ENCODE measurements at regions of chr1 and their contacts with region 1.

Region 1: GRCh38 chr1:203765029-203765837 is at the start of gene LAX1:
- DNase-seq: peak; percentile 87
- H3K4me3 Mint-ChIP-seq: peak within 1 kb of the TSS; percentile 95
- H3K27ac Mint-ChIP-seq: peak within 1 kb of the TSS; percentile 100
- H3K4me1 Mint-ChIP-seq: peaks cover 54% of the 10 kb centered on the region
- H3K27me3 Mint-ChIP-seq: no peaks in the 10 kb centered on the region
- total RNA-seq, gene LAX1: 22.7 to 23.2 TPM

Region 2: DNA sequence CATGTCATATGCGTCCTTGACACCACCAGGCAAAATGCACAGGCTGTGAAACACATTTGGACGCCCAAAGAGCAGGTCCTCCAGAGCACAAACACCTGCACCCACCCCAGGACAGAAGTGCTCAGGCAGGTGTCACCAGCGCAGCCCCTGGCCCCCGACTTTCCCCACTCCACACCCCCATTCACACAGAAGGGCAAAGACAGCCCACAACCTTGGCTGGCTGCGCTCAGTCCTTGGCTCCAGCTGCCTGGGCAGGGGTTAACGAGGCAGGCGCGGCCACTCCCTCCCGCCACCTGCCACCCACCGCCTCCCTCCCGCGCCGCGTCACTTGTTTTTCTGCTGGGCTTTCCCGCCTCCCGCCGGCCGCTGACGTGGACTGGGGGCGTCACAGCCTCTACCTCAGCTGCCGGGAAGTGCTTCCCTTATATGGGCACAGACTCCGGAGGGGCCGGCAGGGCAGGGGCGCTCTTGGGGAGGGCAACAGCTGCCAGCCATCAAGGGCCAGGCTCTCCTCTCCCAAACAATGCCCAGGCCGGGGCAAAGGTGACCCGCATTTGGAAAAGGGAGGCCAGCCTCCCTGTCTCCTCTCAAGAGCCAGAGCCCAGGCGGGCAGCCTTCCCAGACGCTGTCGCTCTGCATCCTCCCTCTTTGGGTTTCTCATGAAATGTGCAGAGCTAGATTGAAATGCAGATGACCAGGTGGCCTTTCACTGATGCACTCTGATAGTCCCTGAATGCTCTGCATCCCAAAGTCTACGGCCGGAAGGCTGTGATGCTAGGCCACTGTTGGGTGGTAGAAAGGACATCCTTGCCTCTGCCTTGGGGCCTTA is 474.8 kb before region 1 on chr1:
- CTCF ChIA-PET with region 1: no interaction called
- POLR2A ChIA-PET with region 1: interaction called, 14 read pairs
- DNase-seq: peak; percentile 98
- H3K4me3 Mint-ChIP-seq: peak overlapping the region; percentile 76
- H3K27ac Mint-ChIP-seq: peak overlapping the region; percentile 100
- H3K4me1 Mint-ChIP-seq: peaks cover 73% of the 10 kb centered on the region
- H3K27me3 Mint-ChIP-seq: no peaks in the 10 kb centered on the region

Region 3: GRCh38 chr1:203682473-203683383 is 82.5 kb before region 1 on chr1:
- CTCF ChIA-PET with region 1: no interaction called
- POLR2A ChIA-PET with region 1: interaction called, 14 read pairs
- DNase-seq: peak; percentile 80
- H3K4me3 Mint-ChIP-seq: peak overlapping the region; percentile 0
- H3K27ac Mint-ChIP-seq: peak overlapping the region; percentile 81
- H3K4me1 Mint-ChIP-seq: peaks cover 55% of the 10 kb centered on the region
- H3K27me3 Mint-ChIP-seq: no peaks in the 10 kb centered on the region

Region 4: DNA sequence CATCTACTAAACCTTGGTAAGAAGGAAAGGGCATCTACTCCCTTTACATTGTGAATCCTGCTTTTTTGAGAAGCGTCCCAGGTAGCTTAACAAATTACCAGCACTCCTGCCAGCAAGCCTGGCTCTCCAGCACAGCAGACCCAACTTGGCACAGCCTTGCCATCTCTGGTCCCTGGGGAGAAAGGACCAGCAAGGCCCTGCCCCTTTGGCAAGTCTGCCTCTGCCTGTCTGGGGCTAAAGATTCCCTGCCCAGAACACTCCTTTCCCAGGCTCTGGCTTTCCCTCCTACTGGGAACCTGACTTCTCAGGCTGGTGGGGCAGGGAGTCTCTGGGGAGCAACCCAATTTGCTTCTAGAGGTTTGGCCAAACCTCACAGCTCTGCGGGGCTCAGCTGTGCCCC is 70.1 kb before region 1 on chr1:
- CTCF ChIA-PET with region 1: no interaction called
- POLR2A ChIA-PET with region 1: no interaction called
- DNase-seq: no peak
- H3K4me3 Mint-ChIP-seq: no peak overlapping the region
- H3K27ac Mint-ChIP-seq: no peak overlapping the region
- H3K4me1 Mint-ChIP-seq: peaks cover 51% of the 10 kb centered on the region
- H3K27me3 Mint-ChIP-seq: no peaks in the 10 kb centered on the region

Region 5: DNA sequence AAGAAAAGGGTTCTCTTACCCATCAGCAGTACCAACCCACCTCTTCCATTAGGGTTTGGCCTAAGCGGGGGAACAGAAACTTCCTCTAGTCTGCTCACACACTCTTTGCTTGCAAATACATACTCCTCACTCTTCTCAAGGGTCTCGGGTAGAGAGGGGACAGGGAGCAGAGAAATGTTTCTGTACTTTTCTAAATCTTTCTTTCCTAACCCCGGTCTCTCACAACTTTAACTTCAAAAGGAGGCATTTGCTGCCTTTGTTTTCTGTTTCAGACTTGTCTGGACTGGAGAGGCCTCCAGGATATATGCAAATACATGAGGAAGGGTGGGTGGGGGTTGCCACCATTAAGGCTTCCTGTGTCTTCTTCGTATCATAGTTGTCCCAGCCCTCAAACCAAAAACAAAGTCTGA is 10.8 kb before region 1 on chr1:
- CTCF ChIA-PET with region 1: interaction called, 4 read pairs
- POLR2A ChIA-PET with region 1: interaction called, 30 read pairs
- DNase-seq: no peak
- H3K4me3 Mint-ChIP-seq: no peak overlapping the region
- H3K27ac Mint-ChIP-seq: peak overlapping the region; percentile 70
- H3K4me1 Mint-ChIP-seq: peaks cover 28% of the 10 kb centered on the region
- H3K27me3 Mint-ChIP-seq: no peaks in the 10 kb centered on the region

Region 6: DNA sequence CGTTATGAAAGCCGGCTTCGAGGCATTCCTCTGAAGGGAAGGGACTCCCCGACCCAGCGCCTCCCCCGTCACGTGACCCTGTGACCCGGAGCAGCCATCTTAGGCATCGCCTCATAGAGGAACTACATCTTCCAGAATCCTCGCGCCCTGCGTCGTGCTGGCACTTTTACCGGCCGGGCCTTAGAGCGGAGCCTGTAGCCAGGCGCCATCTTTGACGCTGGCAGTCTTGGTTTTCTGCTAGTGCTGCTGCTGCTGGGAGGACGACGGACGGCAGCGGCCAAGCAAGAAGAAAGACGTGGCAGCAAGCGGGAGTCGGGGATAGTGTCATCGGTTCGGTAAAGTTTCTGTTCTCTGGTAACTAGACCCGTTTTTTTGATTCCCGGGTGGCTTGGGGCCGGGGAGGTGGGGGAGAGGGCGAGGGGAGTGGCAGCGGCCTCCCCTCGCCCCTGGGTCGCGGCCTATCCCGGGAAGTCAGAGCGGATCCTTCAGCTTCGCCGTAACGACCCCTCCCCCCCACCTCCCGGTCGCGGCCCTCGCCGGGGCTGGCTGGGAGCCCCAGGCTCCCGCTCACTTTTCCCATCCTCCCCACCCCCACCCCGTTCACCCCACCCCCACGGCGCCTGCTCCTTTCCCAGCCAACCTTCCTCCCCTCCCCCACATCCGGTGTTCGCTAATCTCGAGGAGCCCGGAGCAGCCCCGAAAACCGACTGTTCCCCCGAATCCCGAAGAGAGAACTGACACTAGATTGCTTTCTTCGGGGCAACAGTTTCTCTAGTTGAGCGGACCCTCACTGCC is 30.4 kb after region 1 on chr1 and contains the starts of genes ZBED6 and ZC3H11A:
- CTCF ChIA-PET with region 1: no interaction called
- POLR2A ChIA-PET with region 1: interaction called, 16 read pairs
- DNase-seq: peak; percentile 99
- H3K4me3 Mint-ChIP-seq: peak within 1 kb of the TSS; percentile 99
- H3K27ac Mint-ChIP-seq: peak within 1 kb of the TSS; percentile 98
- H3K4me1 Mint-ChIP-seq: peaks cover 45% of the 10 kb centered on the region
- H3K27me3 Mint-ChIP-seq: no peaks in the 10 kb centered on the region
- total RNA-seq, gene ZBED6: 18.4 to 19.5 TPM
- total RNA-seq, gene ZC3H11A: 99.1 to 101 TPM

Measured in activated CD4-positive, alpha-beta memory T cell treated with anti-CD3 and anti-CD28 coated beads, Interleukin-2, amount 10 ng/mL, durations not matched to agents 7 days and 5 days (primary cell).